Motor neuron (in vitro differentiated cells): ENCODE measurements at regions of chr5 and their contacts with region 1.

Region 1: DNA sequence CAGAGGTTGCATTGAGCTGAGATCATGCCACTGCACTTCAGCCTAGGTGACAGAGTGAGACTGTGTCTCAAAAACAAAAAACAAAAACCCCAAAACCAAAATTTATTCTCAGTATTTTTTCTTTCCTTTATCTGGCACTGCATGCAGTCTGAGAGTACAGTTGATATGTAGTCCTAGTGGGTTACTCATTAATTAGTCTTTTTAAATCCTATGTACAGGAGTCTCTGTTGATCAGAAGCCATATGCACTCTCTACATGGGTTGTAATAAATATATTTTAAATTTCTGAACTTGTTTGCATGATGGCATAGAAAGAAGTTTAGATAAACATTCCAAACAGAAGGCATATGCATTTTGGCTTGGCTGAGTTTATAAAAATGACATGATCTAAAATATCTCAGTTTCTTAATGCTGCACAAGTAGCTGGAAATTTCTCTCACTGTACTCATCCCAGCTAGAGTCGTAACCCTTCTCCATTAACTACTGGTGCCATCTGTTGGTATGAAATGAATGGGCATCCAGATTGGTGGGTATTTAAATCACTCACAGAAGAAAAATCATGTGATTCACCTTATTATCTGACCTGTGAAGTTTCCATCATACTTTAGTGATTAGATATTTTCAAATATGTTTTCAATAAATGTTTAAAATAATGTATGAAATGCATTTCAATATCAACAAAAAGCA is 284.8 kb downstream of the CTNND2 start:
- ATAC-seq: peak in 4 of 8 experiments; percentile 49 to 89 (median 72)
- H3K4me3 ChIP-seq: no peak overlapping the region
- H3K27ac ChIP-seq: no peak overlapping the region
- H3K4me1 ChIP-seq: peaks cover 0 to 2% of the 10 kb centered on the region in 2 donors

Region 2: DNA sequence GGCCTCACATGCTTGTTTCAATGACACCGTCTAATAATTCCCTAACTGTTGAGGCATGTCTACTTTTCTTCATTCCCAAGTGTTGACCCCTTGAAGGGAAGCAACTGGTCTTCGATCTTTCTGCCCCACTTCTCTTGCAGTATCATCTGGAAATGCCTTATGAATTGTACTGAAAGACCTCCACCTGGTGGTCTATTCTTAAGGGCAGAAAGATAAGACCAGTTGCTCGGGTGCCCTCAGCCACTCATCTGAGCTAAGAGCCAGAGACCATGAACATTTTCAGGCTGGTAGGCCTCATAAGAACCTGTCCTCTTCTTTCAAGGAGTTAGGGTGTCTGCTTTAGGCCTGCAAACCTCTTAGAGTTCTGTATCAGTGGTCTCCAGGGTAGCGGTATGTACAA is 257.7 kb before region 1 on chr5:
- in situ Hi-C with region 1: loop called in 1 of 9 experiments (anchors 25 kb)
- ATAC-seq: no peak
- H3K4me3 ChIP-seq: no peak overlapping the region
- H3K27ac ChIP-seq: no peak overlapping the region
- H3K4me1 ChIP-seq: no peaks in the 10 kb centered on the region

Region 3: GRCh38 chr5:11683666-11684065 is 64.2 kb after region 1 on chr5:
- in situ Hi-C with region 1: no loop called
- ATAC-seq: no peak
- H3K4me3 ChIP-seq: no peak overlapping the region
- H3K27ac ChIP-seq: no peak overlapping the region
- H3K4me1 ChIP-seq: no peaks in the 10 kb centered on the region